Mammary epithelial cell (primary cell): ENCODE measurements at regions of chr14 and their contacts with region 1.

Region 1: GRCh38 chr14:20530771-20531571 is 25.6 kb downstream of the RNASE10 start:
- DNase-seq: peak; percentile 58
- H3K4me3 ChIP-seq: no peak overlapping the region
- H3K27ac ChIP-seq: no peak overlapping the region
- H3K4me1 ChIP-seq: no peaks in the 10 kb centered on the region
- H3K27me3 ChIP-seq: no peaks in the 10 kb centered on the region
- CTCF ChIP-seq: peak; percentile 70 to 79

Region 2: GRCh38 chr14:20606190-20606901 is 75.4 kb after region 1 on chr14:
- CTCF ChIA-PET with region 1: no interaction called
- dilution Hi-C with region 1: no loop called
- in situ Hi-C with region 1: no loop called
- intact Hi-C with region 1: loop called (anchors 1 kb)
- DNase-seq: peak; percentile 47
- H3K4me3 ChIP-seq: no peak overlapping the region
- H3K27ac ChIP-seq: no peak overlapping the region
- H3K4me1 ChIP-seq: peaks cover 5% of the 10 kb centered on the region
- H3K27me3 ChIP-seq: no peaks in the 10 kb centered on the region
- CTCF ChIP-seq: peak; percentile 77

Region 3: DNA sequence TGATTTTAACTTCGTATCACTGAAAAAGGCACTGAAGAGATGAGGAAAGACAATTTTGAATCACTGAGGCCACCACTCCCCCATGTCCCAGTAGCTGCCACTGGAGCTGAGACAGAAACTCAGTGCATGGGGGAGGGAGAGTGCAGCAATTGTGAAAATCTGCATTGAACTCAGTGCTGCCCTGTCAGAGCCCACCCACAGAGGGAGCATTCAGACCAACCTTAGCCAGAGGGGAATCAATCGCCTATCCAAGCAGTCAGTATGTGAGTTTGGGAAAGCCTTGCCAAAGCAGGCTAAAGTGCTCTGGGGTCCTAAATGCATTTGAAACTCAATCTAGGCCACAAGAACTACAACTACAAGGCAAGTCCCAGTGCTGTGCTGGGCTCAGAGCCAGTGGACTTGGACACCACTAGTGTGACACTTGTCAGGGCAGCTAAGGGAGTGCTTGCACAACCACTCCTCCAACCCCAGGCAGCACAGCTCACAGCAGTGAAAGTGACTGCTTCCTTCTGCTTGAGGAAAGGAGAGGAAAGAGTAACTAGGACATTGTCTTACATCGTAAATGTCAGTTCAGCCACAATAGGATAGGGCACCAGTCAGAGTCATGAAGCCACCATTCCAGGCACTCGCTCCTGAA is 373.5 kb after region 1 on chr14:
- CTCF ChIA-PET with region 1: no interaction called
- dilution Hi-C with region 1: no loop called
- in situ Hi-C with region 1: no loop called
- intact Hi-C with region 1: no loop called
- DNase-seq: no peak
- H3K4me3 ChIP-seq: no peak overlapping the region
- H3K27ac ChIP-seq: no peak overlapping the region
- H3K4me1 ChIP-seq: no peaks in the 10 kb centered on the region
- H3K27me3 ChIP-seq: no peaks in the 10 kb centered on the region
- CTCF ChIP-seq: no peak